ENCODE measurements at regions of chr3 and their contacts with region 1.

Region 1: GRCh38 chr3:195133462-195133861 is 137.5 kb downstream of the XXYLT1 start:
- DNase-seq: peak; percentile 91
- H3K4me3 ChIP-seq: no peak overlapping the region
- H3K27ac ChIP-seq: peak overlapping the region; percentile 55
- H3K4me1 ChIP-seq: 0 out of 2 replicates have a peak, but pooled peaks cover 6% of the 10 kb centered on the region
- H3K27me3 ChIP-seq: no peaks in the 10 kb centered on the region

Region 2: DNA sequence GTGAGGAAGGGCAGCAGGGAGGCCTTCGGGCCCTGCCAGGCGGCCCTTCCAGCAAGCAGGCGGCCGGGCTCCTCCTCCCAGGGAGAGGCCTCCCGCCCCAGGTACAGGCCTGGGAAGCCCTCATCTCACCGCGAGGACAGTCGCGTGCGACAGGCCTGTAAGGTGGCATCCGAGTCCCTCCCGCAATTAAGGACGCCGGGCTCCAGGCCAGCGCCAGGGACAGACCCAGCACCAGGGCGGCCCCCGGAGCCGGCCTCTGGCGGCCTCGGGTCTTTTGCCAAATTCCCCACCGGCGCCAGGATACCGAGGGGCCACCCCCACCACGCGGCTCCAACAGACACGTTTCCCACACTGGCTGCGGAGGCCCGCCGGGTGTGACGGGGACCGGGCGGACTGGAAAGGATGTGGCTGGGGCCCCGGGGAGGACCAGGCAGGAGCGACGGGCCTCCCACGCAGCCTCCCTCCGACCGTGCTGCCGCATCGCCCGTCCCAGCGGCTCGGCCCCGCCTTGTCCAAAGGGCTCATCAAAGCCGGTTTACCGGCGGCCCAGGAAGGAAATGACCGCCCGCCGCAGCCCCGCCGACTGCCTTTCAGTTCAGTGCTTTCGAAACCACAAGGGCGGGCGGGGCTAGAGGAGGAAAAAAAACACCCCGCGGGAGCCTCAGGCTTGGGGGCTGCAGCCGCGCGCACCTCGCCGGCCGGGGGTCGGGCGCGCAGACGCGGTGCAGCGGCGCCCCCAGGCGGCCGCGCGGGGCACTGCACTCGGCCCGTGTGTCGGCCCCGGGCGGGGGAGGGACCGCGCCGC is 126.2 kb after region 1 on chr3:
- in situ Hi-C with region 1: loop called (anchors 10 kb)
- DNase-seq: peak; percentile 97
- H3K4me3 ChIP-seq: peak overlapping the region; percentile 85
- H3K27ac ChIP-seq: peak overlapping the region; percentile 80
- H3K4me1 ChIP-seq: peaks cover 10% of the 10 kb centered on the region
- H3K27me3 ChIP-seq: no peaks in the 10 kb centered on the region

Measured in GM23248 (cell line).